ENCODE measurements at regions of chr18 and their contacts with region 1.

Region 1: GRCh38 chr18:31596081-31596872 is 4.6 kb downstream of the TTR start:
- DNase-seq: no peak
- ATAC-seq: no peak
- H3K4me3 ChIP-seq: no peak overlapping the region
- H3K27ac ChIP-seq: peak overlapping the region in 1 of 12 donors; percentile 11
- H3K4me1 ChIP-seq: no peaks in the 10 kb centered on the region
- H3K27me3 ChIP-seq: peaks cover 0 to under 1% (median 0%) of the 10 kb centered on the region in 9 donors
- CTCF ChIP-seq: no peak
- POLR2A ChIP-seq: no peak

Region 2: DNA sequence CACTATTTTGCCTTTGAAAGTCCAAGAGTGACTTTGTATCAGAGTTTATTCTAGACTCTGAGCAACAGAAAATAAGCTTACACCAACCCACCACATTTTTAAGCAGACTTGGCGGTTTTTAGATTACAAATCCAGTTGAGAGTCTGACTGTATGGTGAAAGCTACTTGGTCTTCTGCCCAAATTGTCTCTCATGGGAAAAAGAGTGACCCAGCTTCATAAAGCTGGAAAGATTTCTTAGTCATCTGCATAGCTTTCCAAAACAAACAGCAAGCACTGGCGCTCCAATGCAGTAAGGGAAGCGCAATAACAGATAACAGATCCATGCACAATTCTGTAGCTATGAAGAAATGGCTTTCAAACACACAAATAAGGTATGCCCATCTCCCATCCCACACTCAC is 271.2 kb before region 1 on chr18:
- intact Hi-C with region 1: no loop called
- DNase-seq: peak in 1 of 5 donors; percentile 18
- ATAC-seq: peak in 2 of 4 donors; percentile 41 to 79
- H3K4me3 ChIP-seq: no peak overlapping the region
- H3K27ac ChIP-seq: no peak overlapping the region
- H3K4me1 ChIP-seq: peaks cover 0 to 8% (median 0%) of the 10 kb centered on the region in 12 donors
- H3K27me3 ChIP-seq: no peaks in the 10 kb centered on the region
- CTCF ChIP-seq: no peak
- POLR2A ChIP-seq: no peak

Region 3: DNA sequence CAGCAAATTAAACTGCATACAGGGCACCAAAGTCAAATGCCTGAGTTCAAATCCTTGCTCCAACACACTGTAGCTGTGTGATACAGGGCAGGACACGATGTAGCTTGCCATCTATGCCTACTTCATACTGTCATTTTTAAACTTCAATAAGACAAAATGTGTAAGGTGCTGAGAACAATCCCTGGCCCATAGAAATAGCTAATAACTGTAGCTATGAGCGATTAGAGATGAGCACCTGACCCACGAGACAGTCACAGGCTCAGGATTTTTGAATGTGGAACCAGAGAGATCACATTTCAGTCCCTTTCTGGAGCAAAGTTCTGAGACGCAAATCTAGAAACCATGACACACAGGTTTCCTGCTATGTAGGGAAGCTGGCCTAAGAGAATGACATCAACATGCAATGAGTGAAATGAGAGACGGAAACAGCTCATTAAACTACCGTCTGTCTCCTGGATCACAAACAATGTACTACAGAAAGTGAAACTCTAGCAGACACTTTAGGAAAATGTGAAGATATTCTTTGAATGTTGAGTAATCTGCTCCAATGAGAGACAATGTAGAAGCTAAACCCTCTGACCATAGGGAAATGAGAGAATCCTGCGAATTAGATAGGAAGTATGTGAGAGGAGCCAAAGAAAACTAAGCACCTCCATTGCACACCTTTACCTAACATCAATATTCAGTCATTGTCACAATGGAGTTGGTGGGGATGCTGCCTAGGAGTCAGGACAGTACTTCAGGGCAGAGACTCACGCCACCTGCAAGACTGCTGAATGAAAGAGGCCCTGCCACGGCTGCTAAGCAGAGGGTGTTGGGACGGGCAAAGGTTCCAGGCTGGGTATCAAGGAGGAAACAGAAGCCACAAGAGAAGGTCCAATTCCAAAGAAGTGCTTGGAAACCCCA is 62.6 kb after region 1 on chr18:
- intact Hi-C with region 1: loop called in 1 of 10 experiments (anchors 10 kb)
- DNase-seq: no peak
- ATAC-seq: peak in 1 of 4 donors; percentile 74
- H3K4me3 ChIP-seq: no peak overlapping the region
- H3K27ac ChIP-seq: peak overlapping the region in 1 of 12 donors; percentile 3
- H3K4me1 ChIP-seq: peaks cover 0 to 14% (median 0%) of the 10 kb centered on the region in 12 donors
- H3K27me3 ChIP-seq: no peaks in the 10 kb centered on the region
- CTCF ChIP-seq: no peak
- POLR2A ChIP-seq: no peak